Activated B cell treated with CpG ODN at 0.5 μM for 24 hours (primary cell): ENCODE measurements at regions of chr16 and their contacts with region 1.

Region 1: GRCh38 chr16:47460711-47461597 is at the starts of genes ITFG1 and PHKB:
- DNase-seq: peak; percentile 95
- ATAC-seq: peak; percentile 90
- H3K4me3 Mint-ChIP-seq: peak within 1 kb of the TSS; percentile 98
- H3K27ac Mint-ChIP-seq: peak within 1 kb of the TSS; percentile 96
- H3K4me1 Mint-ChIP-seq: peaks cover 68% of the 10 kb centered on the region
- H3K27me3 Mint-ChIP-seq: no peaks in the 10 kb centered on the region
- CTCF ChIP-seq: no peak
- total RNA-seq, gene ITFG1: 23.8 and 30.9 TPM in 2 replicates
- total RNA-seq, gene PHKB: 94.8 and 110 TPM in 2 replicates

Region 2: DNA sequence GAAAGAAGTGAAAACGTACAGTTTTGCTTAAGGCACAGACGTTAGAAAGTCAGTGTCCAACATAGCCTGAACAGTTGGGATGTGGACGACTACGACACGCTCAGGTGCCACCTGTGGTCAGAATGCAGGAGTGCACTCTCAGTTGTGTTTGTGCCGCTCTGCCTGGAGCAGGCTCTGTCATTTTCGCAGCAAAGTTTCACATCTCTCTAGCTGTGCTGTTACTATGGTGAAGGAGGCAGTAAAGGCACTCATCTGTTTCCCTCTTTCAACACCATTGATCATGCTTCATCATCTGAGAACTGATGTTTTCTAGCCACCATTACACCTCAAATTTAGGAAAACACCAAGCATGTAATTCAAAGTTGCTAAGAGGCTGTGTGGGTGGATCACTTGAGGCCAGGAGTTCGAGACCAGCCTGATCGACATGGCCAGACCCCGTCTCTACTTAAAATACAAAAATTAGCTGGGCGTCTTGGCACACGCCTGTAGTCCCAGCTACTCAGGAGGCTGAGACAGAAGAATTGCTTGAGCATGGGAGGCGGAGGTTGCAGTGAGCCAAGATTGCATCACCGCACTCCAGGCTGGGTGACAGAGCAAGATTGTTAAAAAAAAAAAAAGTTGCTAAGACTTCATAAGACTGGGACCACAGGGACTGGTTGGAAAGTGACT is 442.6 kb before region 1 on chr16:
- CTCF ChIA-PET with region 1: no interaction called
- POLR2A ChIA-PET with region 1: interaction called, 4 read pairs
- intact Hi-C with region 1: loop called (anchors 2 kb)
- DNase-seq: peak; percentile 39
- ATAC-seq: peak; percentile 98
- H3K4me3 Mint-ChIP-seq: peak overlapping the region; percentile 13
- H3K27ac Mint-ChIP-seq: peak overlapping the region; percentile 73
- H3K4me1 Mint-ChIP-seq: peaks cover 28% of the 10 kb centered on the region
- H3K27me3 Mint-ChIP-seq: no peaks in the 10 kb centered on the region
- CTCF ChIP-seq: no peak

Region 3: DNA sequence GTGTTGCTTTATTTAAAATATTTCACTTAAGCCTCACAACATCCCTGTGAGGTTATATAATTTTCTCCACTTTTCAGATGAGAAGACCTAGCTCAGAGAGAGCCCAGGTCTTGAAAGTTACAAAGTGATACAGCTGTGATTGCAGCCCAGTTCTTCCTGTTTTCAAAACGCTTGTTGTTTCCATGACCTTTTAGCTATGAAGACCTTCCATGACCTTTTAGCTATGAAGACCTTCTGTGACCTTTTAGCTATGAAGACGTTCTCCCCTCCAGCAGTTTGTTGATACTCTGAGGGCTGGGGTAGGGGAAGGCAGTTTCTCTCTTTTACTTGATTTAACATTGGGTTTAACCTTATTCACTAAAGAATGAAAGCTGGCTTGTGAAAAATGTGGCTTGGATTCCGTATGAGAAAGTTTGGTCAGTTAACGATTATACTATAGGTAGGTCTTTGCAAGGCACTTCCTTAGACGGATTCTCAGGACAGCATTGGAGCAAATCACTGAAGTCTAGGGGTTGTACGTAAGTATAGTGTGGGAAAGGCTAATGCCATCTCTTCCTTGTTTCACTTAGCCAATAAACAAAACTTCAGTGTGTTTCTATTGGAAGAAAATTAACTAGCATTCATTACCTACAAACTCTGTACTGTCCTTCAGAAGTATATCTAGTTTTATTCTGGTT is 20.9 kb after region 1 on chr16:
- CTCF ChIA-PET with region 1: interaction called, 4 read pairs
- POLR2A ChIA-PET with region 1: interaction called, 40 read pairs
- intact Hi-C with region 1: loop called (anchors 1 kb)
- DNase-seq: no peak
- ATAC-seq: peak; percentile 82
- H3K4me3 Mint-ChIP-seq: peak overlapping the region; percentile 44
- H3K27ac Mint-ChIP-seq: peak overlapping the region; percentile 83
- H3K4me1 Mint-ChIP-seq: peaks cover 64% of the 10 kb centered on the region
- H3K27me3 Mint-ChIP-seq: no peaks in the 10 kb centered on the region
- CTCF ChIP-seq: no peak

Region 4: DNA sequence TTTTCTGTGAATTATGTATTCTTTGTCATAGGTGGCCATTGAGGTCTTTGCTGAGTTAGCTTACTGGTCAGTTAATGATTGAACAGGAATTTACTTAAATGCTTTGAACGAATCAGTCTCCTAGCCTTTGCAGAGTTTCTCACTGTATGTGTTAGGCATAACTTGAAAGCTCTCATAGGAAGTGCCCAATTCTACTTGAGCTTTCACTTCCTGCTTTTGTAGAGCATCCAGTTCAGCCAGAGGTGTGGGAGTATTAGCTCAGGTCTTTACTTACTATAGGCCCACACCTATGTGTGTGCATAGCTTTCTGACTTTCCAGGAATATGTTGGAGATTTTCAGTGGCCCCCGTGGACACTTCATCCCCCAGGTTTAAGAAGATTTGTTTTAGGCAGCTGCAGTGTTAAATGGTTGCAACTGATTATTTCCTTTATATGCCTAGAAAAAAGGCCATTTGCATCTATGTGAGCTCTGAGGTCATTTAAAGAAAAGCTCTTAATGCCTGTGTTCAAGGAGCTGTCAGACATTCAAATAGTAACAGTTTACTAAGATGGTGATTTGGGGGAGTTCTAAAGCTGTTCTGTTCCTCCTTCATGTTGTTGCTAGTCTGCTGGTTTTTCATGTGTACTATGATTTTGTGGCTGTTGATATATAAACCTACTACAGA is 62.5 kb after region 1 on chr16:
- CTCF ChIA-PET with region 1: no interaction called
- POLR2A ChIA-PET with region 1: interaction called, 17 read pairs
- intact Hi-C with region 1: loop called (anchors 1 kb)
- DNase-seq: no peak
- ATAC-seq: peak; percentile 98
- H3K4me3 Mint-ChIP-seq: peak overlapping the region; percentile 3
- H3K27ac Mint-ChIP-seq: peak overlapping the region; percentile 83
- H3K4me1 Mint-ChIP-seq: peaks cover 17% of the 10 kb centered on the region
- H3K27me3 Mint-ChIP-seq: no peaks in the 10 kb centered on the region
- CTCF ChIP-seq: no peak

Region 5: GRCh38 chr16:47599512-47599911 is 138.6 kb after region 1 on chr16:
- CTCF ChIA-PET with region 1: no interaction called
- POLR2A ChIA-PET with region 1: interaction called, 9 read pairs
- intact Hi-C with region 1: loop called (anchors 5 kb)
- DNase-seq: no peak
- ATAC-seq: peak; percentile 57
- H3K4me3 Mint-ChIP-seq: no peak overlapping the region
- H3K27ac Mint-ChIP-seq: peak overlapping the region; percentile 69
- H3K4me1 Mint-ChIP-seq: peaks cover 16% of the 10 kb centered on the region
- H3K27me3 Mint-ChIP-seq: no peaks in the 10 kb centered on the region
- CTCF ChIP-seq: no peak

Region 6: GRCh38 chr16:47705266-47705665 is 244.3 kb after region 1 on chr16:
- CTCF ChIA-PET with region 1: no interaction called
- POLR2A ChIA-PET with region 1: no interaction called
- intact Hi-C with region 1: no loop called
- DNase-seq: no peak
- ATAC-seq: no peak
- H3K4me3 Mint-ChIP-seq: no peak overlapping the region
- H3K27ac Mint-ChIP-seq: no peak overlapping the region
- H3K4me1 Mint-ChIP-seq: no peaks in the 10 kb centered on the region
- H3K27me3 Mint-ChIP-seq: no peaks in the 10 kb centered on the region
- CTCF ChIP-seq: no peak